ENCODE measurements at regions of chr2 and their contacts with region 1.

Region 1: DNA sequence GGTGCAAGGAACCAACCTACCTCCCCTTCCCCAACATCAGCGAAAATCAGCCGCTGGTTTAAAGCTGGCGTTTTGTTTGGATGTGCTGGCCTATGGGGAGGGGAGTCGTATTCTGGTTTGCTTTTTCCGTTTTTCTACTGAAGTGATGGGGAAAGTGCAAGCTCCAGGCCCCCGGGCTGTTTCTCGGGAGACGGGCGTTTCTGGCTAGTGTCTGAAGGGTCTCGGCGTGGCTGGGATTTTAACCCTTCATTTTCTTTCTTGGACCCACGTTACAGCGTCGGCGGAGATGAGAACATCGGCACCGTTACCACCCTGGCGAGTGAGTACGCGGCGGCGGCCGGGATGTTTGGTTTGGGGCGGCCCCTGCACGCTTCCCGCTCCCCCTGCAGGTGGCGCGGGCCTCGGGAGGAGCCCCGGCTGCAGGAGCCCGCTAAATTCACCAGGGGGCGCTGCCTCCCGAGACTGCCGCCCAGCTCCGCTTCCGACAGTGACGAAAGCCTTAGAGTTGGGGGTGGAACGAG is 70.7 kb downstream of the PLB1 start:
- DNase-seq: peak; percentile 72
- ATAC-seq: peak; percentile 98
- H3K4me3 ChIP-seq: peak overlapping the region; percentile 65
- H3K27ac ChIP-seq: peak overlapping the region; percentile 67
- H3K4me1 ChIP-seq: 0 out of 2 replicates have a peak, but pooled peaks cover 2% of the 10 kb centered on the region
- H3K27me3 ChIP-seq: no peaks in the 10 kb centered on the region
- CTCF ChIP-seq: peak; percentile 100
- POLR2A ChIP-seq: peak; percentile 54
- RAD21 ChIP-seq: peak; percentile 97

Region 2: DNA sequence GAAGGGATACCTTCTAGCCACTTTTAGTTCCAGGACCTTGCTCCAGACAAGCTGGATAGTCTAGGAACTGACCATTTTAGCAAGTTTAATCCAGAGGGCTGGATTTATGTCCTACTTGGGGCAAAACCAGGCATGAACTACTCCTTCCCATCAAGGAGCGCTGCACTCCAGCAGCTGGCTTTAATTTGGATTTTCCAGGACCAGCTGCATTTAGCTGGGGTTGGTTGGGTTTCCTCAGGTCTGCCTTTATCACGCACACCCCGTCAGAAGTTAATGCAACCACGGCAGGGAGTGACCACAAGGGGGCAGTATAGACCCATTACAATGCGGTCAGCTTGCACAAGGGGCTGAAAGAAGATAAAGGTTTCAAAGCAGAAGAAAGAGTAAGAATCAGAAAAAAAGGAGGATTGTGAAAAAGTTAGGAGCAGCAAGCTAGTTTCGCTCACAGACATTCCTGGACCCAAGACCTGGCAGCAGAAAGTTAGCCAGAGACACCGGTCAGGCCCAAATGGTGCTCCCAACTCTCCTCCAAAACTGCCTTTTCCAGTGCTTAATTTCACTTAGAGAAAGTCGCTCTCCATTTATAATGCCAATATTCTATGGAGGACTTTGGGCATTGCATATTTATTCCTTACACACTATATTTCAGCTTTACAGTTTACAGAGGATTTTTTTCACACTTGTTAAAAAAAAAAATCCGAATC is 862.8 kb before region 1 on chr2:
- CTCF ChIA-PET with region 1: interaction called, 3 read pairs
- POLR2A ChIA-PET with region 1: no interaction called
- dilution Hi-C with region 1: no loop called
- in situ Hi-C with region 1: no loop called
- intact Hi-C with region 1: loop called (anchors 10 kb)
- DNase-seq: peak; percentile 96
- ATAC-seq: peak; percentile 70
- H3K4me3 ChIP-seq: no peak overlapping the region
- H3K27ac ChIP-seq: peak overlapping the region; percentile 35; the same call in 1 of the 2 replicates
- H3K4me1 ChIP-seq: peaks cover 18% of the 10 kb centered on the region
- H3K27me3 ChIP-seq: no peaks in the 10 kb centered on the region
- CTCF ChIP-seq: peak; percentile 96
- POLR2A ChIP-seq: no peak
- RAD21 ChIP-seq: peak; percentile 93

Region 3: GRCh38 chr2:28594289-28595108 is 27.9 kb after region 1 on chr2:
- CTCF ChIA-PET with region 1: interaction called, 11 read pairs
- POLR2A ChIA-PET with region 1: interaction called, 3 read pairs
- dilution Hi-C with region 1: no loop called
- in situ Hi-C with region 1: no loop called
- intact Hi-C with region 1: no loop called
- DNase-seq: peak; percentile 82
- ATAC-seq: peak; percentile 83
- H3K4me3 ChIP-seq: no peak overlapping the region
- H3K27ac ChIP-seq: peak overlapping the region; percentile 5; the same call in 1 of the 2 replicates
- H3K4me1 ChIP-seq: peaks cover 5% of the 10 kb centered on the region
- H3K27me3 ChIP-seq: no peaks in the 10 kb centered on the region
- CTCF ChIP-seq: peak; percentile 83
- POLR2A ChIP-seq: no peak
- RAD21 ChIP-seq: peak; percentile 88

Region 4: GRCh38 chr2:28661589-28662001 is 95.0 kb after region 1 on chr2:
- CTCF ChIA-PET with region 1: interaction called, 6 read pairs
- POLR2A ChIA-PET with region 1: no interaction called
- dilution Hi-C with region 1: no loop called
- in situ Hi-C with region 1: no loop called
- intact Hi-C with region 1: loop called (anchors 1 kb)
- DNase-seq: peak; percentile 88
- ATAC-seq: peak; percentile 5
- H3K4me3 ChIP-seq: no peak overlapping the region
- H3K27ac ChIP-seq: peak overlapping the region; percentile 49; the same call in 1 of the 2 replicates
- H3K4me1 ChIP-seq: peaks cover 34% of the 10 kb centered on the region
- H3K27me3 ChIP-seq: no peaks in the 10 kb centered on the region
- CTCF ChIP-seq: no peak
- POLR2A ChIP-seq: no peak
- RAD21 ChIP-seq: no peak; the same call in 1 of the 2 replicates

Region 5: DNA sequence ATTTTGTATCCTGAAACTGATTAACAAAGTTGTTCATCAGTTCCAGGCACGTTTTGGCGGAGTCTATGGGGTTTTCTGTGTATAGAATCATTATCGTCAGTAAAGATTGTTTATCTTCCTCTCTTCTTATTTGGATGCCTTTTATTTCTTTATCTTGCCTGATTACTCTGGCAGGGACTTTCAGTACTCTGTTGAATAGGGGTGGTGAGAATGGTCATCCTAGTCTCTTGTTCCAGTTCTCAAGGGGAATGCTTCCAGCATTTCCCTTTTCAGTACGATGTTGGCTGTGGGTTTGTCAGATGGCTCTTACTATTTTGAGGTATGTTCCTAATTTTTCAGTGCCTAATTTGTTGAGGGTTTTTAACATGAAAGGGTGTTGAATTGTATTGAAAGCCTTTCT is 230.0 kb after region 1 on chr2:
- CTCF ChIA-PET with region 1: interaction called, 3 read pairs
- POLR2A ChIA-PET with region 1: no interaction called
- dilution Hi-C with region 1: no loop called
- in situ Hi-C with region 1: no loop called
- intact Hi-C with region 1: loop called (anchors 5 kb)
- DNase-seq: no peak
- ATAC-seq: no peak
- H3K4me3 ChIP-seq: no peak overlapping the region
- H3K27ac ChIP-seq: no peak overlapping the region
- H3K4me1 ChIP-seq: no peaks in the 10 kb centered on the region
- H3K27me3 ChIP-seq: no peaks in the 10 kb centered on the region
- CTCF ChIP-seq: no peak
- POLR2A ChIP-seq: no peak
- RAD21 ChIP-seq: no peak

Region 6: GRCh38 chr2:28904295-28904694 is 337.7 kb after region 1 on chr2:
- CTCF ChIA-PET with region 1: no interaction called
- POLR2A ChIA-PET with region 1: no interaction called
- dilution Hi-C with region 1: no loop called
- in situ Hi-C with region 1: no loop called
- intact Hi-C with region 1: loop called (anchors 2 kb)
- DNase-seq: peak; percentile 59
- ATAC-seq: peak; percentile 74
- H3K4me3 ChIP-seq: no peak overlapping the region
- H3K27ac ChIP-seq: peak overlapping the region; percentile 65; the same call in 1 of the 2 replicates
- H3K4me1 ChIP-seq: peaks cover 16% of the 10 kb centered on the region
- H3K27me3 ChIP-seq: no peaks in the 10 kb centered on the region
- CTCF ChIP-seq: no peak
- POLR2A ChIP-seq: no peak
- RAD21 ChIP-seq: no peak

Measured in IMR-90 (cell line).